ENCODE measurements at regions of chr19 and their contacts with region 1.

Region 1: GRCh38 chr19:45016388-45017319 is 15.4 kb downstream of the RELB start:
- DNase-seq: peak; percentile 42
- H3K4me3 Mint-ChIP-seq: peak overlapping the region; percentile 16
- H3K27ac Mint-ChIP-seq: peak overlapping the region; percentile 84
- H3K4me1 Mint-ChIP-seq: peaks cover 10% of the 10 kb centered on the region
- H3K27me3 Mint-ChIP-seq: no peaks in the 10 kb centered on the region

Region 2: GRCh38 chr19:44988896-44989556 is 27.6 kb before region 1 on chr19:
- intact Hi-C with region 1: loop called (anchors 2 kb)
- DNase-seq: peak; percentile 32
- H3K4me3 Mint-ChIP-seq: no peak overlapping the region
- H3K27ac Mint-ChIP-seq: peak overlapping the region; percentile 65
- H3K4me1 Mint-ChIP-seq: no peaks in the 10 kb centered on the region
- H3K27me3 Mint-ChIP-seq: no peaks in the 10 kb centered on the region

Region 3: GRCh38 chr19:45059278-45059965 is 42.8 kb after region 1 on chr19:
- intact Hi-C with region 1: no loop called
- DNase-seq: peak; percentile 73
- H3K4me3 Mint-ChIP-seq: no peak overlapping the region
- H3K27ac Mint-ChIP-seq: peak overlapping the region; percentile 63
- H3K4me1 Mint-ChIP-seq: peaks cover 5% of the 10 kb centered on the region
- H3K27me3 Mint-ChIP-seq: no peaks in the 10 kb centered on the region

Region 4: DNA sequence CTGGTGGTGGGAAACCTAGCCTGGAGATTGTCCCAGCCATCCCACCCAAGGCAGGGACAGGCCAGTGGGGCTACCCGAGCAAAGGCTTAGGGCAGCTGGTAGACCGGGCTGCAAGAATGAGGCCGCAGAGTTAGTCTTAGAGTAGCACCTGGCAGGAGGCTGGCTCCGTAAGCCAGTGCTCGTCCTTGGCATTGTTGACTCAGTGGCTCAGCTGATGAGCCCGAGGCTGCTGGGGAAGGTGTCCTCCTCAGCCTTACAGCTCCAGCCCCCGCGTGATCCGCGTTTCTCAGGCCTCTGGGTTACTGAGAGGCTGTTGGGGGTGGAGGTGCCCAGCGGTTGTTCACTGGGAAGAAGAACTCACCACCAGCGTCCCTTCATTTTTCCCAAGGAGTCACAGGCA is 101.0 kb after region 1 on chr19:
- intact Hi-C with region 1: loop called (anchors 5 kb)
- DNase-seq: no peak
- H3K4me3 Mint-ChIP-seq: no peak overlapping the region
- H3K27ac Mint-ChIP-seq: peak overlapping the region; percentile 71
- H3K4me1 Mint-ChIP-seq: peaks cover 52% of the 10 kb centered on the region
- H3K27me3 Mint-ChIP-seq: no peaks in the 10 kb centered on the region

Measured in activated T-helper 1 cell treated with anti-CD3 and anti-CD28 coated beads, Interleukin-12 subunit alpha, Interleukin-12 subunit beta, Interleukin-2, Interleukin-4 antibody, amounts not matched to agents 30 ng/mL and 10 ng/mL and 1 ng/mL, durations not matched to agents 14 hours and 24 hours and 36 hours (primary cell).